CD4-positive, alpha-beta memory T cell (primary cell): ENCODE measurements at regions of chr1 and their contacts with region 1.

Region 1: DNA sequence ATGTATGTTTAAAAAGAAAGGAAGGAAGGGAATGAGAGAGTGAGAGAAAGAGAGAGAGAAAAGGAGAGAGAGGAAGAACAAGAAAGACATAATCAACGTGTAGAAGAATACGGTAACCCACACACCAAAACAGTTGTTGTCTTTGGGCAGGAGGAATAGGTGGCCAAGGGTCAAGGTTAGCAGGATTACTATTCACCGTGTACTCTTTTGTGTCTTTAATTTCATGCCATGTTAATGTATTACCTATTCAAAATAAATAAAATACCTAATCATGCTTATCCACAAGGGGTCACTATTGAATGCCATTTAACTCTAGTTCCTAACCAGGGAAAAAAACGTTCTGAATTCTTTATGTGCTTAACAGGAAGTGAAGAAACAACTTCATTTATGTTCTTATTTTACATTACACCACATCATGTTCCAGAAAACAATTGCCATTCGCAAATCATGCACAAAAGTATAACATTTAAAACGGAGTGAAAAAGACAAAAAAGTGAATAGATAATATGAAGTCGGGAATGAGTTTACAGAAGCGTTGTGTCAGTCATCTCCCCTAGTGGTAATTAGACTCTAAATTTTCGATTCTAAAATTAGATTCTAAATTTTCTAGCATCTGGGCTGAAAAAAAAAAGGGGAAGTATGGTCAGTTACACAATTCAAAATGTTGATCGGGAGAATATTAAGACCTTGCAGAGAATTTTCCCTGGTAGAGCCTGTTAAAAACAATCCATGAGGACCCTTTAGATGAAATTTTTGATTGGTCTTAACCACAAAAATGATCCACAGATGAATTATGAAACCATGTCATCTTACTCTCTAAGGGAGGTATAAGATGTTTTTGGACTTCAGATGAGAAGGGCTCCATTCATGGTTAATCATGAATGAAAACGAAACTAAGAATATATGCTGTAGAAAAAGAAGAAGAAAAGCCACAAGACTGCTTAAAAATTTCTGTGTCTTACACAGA is 700 bp upstream of the KMO start:
- DNase-seq: peak in 4 of 5 donors; percentile 65 to 70 (median 68)
- H3K4me3 ChIP-seq: peak overlapping the region; percentile 45 to 52
- H3K4me3 Mint-ChIP-seq: peak overlapping the region; percentile 91 to 99 (median 98)
- H3K27ac ChIP-seq: peak overlapping the region; percentile 10
- H3K27ac Mint-ChIP-seq: peak overlapping the region in 6 of 7 donors; percentile 1 to 94 (median 90)
- H3K4me1 ChIP-seq: peaks cover 5% of the 10 kb centered on the region
- H3K4me1 Mint-ChIP-seq: peaks cover 5 to 11% (median 9%) of the 10 kb centered on the region in 4 donors
- H3K27me3 ChIP-seq: no peaks in the 10 kb centered on the region
- H3K27me3 Mint-ChIP-seq: peaks cover 0 to 1% of the 10 kb centered on the region in 2 donors

Region 2: DNA sequence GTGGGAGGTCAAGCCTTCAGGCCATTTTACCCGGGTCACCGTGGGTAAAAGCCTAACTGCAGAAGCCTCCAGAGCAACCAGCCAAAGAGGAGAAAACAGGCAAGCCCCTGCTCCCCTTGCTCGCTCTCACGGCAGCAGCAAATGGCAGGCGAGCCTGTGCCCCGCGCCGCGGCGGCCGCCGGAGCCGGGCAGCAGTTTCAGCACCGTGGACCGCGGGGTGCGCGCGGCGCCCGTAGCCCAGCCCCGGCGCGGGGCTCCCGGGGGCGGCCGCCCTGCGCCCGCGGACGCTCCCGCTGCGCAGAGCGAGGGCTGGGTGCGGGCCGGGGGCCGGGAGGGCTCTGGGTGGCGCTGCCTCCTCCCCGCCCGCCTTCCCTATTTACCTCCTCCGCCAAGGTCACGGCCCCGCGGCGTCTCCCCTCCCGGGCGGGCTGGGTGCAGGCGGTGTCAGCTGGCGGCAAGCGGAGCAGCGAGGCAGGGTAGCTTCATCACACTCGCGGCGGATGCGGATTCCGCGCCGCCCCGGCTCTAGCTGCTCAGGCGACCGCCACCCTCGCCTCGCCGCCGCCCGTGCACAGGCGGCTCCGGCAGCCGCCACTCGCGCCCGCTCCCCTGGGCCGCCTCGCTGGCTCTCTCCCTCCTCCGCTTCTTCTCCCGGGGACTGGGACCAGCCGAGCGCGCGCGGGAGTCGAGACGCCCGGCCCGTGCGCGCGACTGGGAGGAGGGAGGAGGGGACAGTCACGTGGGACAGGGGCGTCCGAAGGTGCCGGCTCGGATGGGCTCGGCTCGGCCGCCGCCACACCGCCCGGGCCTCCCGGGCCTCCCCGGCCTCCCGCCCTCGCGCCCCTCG is 174.7 kb before region 1 on chr1 and contains the start of gene RGS7:
- CTCF ChIA-PET with region 1: no interaction called
- POLR2A ChIA-PET with region 1: no interaction called
- intact Hi-C with region 1: no loop called
- DNase-seq: no peak
- H3K4me3 ChIP-seq: no peak within 1 kb of the TSS
- H3K4me3 Mint-ChIP-seq: peak within 1 kb of the TSS in 7 of 8 donors; percentile 22 to 73 (median 41)
- H3K27ac ChIP-seq: no peak within 1 kb of the TSS
- H3K27ac Mint-ChIP-seq: no peak within 1 kb of the TSS
- H3K4me1 ChIP-seq: no peaks in the 10 kb centered on the region
- H3K4me1 Mint-ChIP-seq: peaks cover 0 to 13% (median 3%) of the 10 kb centered on the region in 4 donors
- H3K27me3 ChIP-seq: no peaks in the 10 kb centered on the region
- H3K27me3 Mint-ChIP-seq: peaks cover 19 to 28% of the 10 kb centered on the region in 2 donors
- total RNA-seq, gene RGS7: not detected

Region 3: DNA sequence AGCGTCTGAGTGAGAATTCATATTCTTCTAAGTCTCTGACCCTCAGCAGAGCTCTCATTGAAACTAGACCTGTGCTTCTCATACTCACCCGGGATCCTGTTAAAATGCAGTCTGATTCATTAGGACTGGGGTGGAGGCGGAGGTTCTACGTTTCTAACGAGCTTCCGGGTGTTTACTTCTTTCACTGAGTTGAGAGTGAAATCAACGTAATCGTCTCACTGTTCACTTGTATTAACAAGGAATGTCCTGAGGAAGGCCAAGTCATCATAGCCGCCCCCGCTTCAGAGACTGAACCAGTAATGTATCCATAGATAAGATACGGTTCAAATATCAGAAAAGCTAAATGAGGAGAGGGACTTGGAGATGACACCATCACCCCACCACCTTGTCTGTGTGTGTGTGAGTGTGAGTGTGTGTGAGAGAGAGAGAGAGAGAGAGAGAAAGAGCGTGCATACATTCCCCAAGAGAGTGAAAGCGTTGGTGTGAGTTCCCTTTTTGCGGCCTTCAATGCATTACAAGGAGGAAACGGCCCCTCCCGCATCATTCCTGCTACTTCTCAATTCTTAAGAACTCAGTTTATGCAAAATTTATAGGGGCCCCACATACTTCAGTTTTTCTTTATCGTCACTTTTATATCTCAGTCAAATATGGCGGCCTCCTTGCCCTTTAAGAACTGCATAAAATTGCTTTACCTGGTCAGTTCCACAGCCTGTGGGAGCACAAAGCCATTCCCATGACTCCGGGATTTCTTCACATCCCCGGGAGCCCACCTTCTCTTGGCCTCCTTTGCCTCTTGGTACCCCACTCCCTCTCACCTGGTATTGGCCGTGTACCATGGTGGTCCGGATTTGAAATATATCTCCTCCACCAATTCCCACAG is 20.5 kb after region 1 on chr1:
- CTCF ChIA-PET with region 1: no interaction called
- POLR2A ChIA-PET with region 1: interaction called, 8 read pairs
- intact Hi-C with region 1: loop called (anchors 2 kb)
- DNase-seq: peak; percentile 47 to 59 (median 49)
- H3K4me3 ChIP-seq: peak overlapping the region in 1 of 2 donors; percentile 46
- H3K4me3 Mint-ChIP-seq: peak overlapping the region; percentile 82 to 94 (median 90)
- H3K27ac ChIP-seq: peak overlapping the region; percentile 17
- H3K27ac Mint-ChIP-seq: peak overlapping the region; percentile 74 to 98 (median 96)
- H3K4me1 ChIP-seq: peaks cover 15% of the 10 kb centered on the region
- H3K4me1 Mint-ChIP-seq: peaks cover 13 to 22% (median 18%) of the 10 kb centered on the region in 4 donors
- H3K27me3 ChIP-seq: no peaks in the 10 kb centered on the region
- H3K27me3 Mint-ChIP-seq: peaks cover 0 to 3% of the 10 kb centered on the region in 2 donors

Region 4: GRCh38 chr1:241847796-241848685 is 316.6 kb after region 1 on chr1 and contains the start of gene EXO1:
- CTCF ChIA-PET with region 1: interaction called, 3 read pairs
- POLR2A ChIA-PET with region 1: no interaction called
- intact Hi-C with region 1: loop called (anchors 2 kb)
- DNase-seq: peak; percentile 90 to 93 (median 92)
- H3K4me3 ChIP-seq: peak within 1 kb of the TSS; percentile 80 to 98
- H3K4me3 Mint-ChIP-seq: peak within 1 kb of the TSS; percentile 95 to 99 (median 98)
- H3K27ac ChIP-seq: peak within 1 kb of the TSS; percentile 85
- H3K27ac Mint-ChIP-seq: peak within 1 kb of the TSS; percentile 98 to 100 (median 99)
- H3K4me1 ChIP-seq: peaks cover 14% of the 10 kb centered on the region
- H3K4me1 Mint-ChIP-seq: peaks cover 13 to 20% (median 15%) of the 10 kb centered on the region in 4 donors
- H3K27me3 ChIP-seq: no peaks in the 10 kb centered on the region
- H3K27me3 Mint-ChIP-seq: no peaks in the 10 kb centered on the region
- total RNA-seq, gene EXO1: 0.41 to 0.44 TPM

Region 5: DNA sequence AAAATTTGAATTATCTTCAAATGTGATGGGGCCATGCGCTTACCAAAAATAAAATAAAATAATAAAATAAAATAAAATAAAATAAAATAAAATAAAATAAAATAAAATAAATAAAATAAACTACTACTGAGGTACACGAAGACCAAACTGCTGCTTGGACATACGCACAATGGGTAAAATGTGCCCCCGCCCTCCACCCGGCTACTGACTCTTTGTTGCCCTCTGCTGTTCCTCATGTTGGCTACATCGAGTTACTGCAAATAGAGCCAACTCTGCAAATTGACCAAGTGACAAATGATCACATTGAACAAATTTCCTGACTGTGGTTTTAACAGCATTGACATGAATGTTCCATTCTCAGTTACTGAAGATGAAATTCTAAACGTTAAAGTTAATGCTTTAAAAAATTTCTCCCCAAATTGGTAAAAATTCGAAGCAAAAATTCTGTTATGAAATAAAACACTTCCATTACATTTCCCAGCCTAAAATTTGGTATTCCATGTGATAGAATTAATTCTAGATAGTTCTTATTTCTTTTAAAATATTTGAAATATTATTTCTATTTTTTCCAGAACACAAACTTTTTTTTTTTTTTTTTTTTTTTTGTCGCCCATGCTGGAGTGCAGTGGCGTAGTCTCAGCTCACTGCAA is 486.2 kb after region 1 on chr1:
- CTCF ChIA-PET with region 1: interaction called, 3 read pairs
- POLR2A ChIA-PET with region 1: no interaction called
- intact Hi-C with region 1: loop called (anchors 1 kb)
- DNase-seq: peak in 4 of 5 donors; percentile 10 to 27 (median 18)
- H3K4me3 ChIP-seq: no peak overlapping the region
- H3K4me3 Mint-ChIP-seq: no peak overlapping the region
- H3K27ac ChIP-seq: no peak overlapping the region
- H3K27ac Mint-ChIP-seq: no peak overlapping the region
- H3K4me1 ChIP-seq: no peaks in the 10 kb centered on the region
- H3K4me1 Mint-ChIP-seq: no peaks in the 10 kb centered on the region
- H3K27me3 ChIP-seq: no peaks in the 10 kb centered on the region
- H3K27me3 Mint-ChIP-seq: no peaks in the 10 kb centered on the region